CD8-positive, alpha-beta T cell (primary cell): ENCODE measurements at regions of chr17 and their contacts with region 1.

Region 1: GRCh38 chr17:49053171-49053829 is 56.1 kb downstream of the IGF2BP1 start:
- DNase-seq: no peak
- ATAC-seq: no peak
- H3K4me3 ChIP-seq: no peak overlapping the region
- H3K4me3 Mint-ChIP-seq: no peak overlapping the region
- H3K27ac ChIP-seq: no peak overlapping the region
- H3K27ac Mint-ChIP-seq: no peak overlapping the region
- H3K4me1 ChIP-seq: no peaks in the 10 kb centered on the region
- H3K4me1 Mint-ChIP-seq: no peaks in the 10 kb centered on the region
- H3K27me3 ChIP-seq: peaks cover 0 to under 1% of the 10 kb centered on the region in 2 experiments
- H3K27me3 Mint-ChIP-seq: peaks cover 12% of the 10 kb centered on the region
- CTCF ChIP-seq: no peak

Region 2: GRCh38 chr17:48738803-48739526 is 314.3 kb before region 1 on chr17:
- CTCF ChIA-PET with region 1: no interaction called
- POLR2A ChIA-PET with region 1: no interaction called
- intact Hi-C with region 1: no loop called
- DNase-seq: no peak
- ATAC-seq: no peak
- H3K4me3 ChIP-seq: no peak overlapping the region
- H3K4me3 Mint-ChIP-seq: no peak overlapping the region
- H3K27ac ChIP-seq: no peak overlapping the region
- H3K27ac Mint-ChIP-seq: no peak overlapping the region
- H3K4me1 ChIP-seq: peaks cover 9% of the 10 kb centered on the region
- H3K4me1 Mint-ChIP-seq: peaks cover 7% of the 10 kb centered on the region
- H3K27me3 ChIP-seq: peaks cover 40 to 57% of the 10 kb centered on the region in 2 experiments
- H3K27me3 Mint-ChIP-seq: peaks cover 91% of the 10 kb centered on the region
- CTCF ChIP-seq: no peak

Region 3: GRCh38 chr17:49117587-49118230 is 64.4 kb after region 1 on chr17:
- CTCF ChIA-PET with region 1: no interaction called
- POLR2A ChIA-PET with region 1: no interaction called
- intact Hi-C with region 1: loop called in 1 of 2 experiments (anchors 10 kb)
- DNase-seq: no peak
- ATAC-seq: no peak
- H3K4me3 ChIP-seq: no peak overlapping the region
- H3K4me3 Mint-ChIP-seq: no peak overlapping the region
- H3K27ac ChIP-seq: no peak overlapping the region
- H3K27ac Mint-ChIP-seq: no peak overlapping the region
- H3K4me1 ChIP-seq: no peaks in the 10 kb centered on the region
- H3K4me1 Mint-ChIP-seq: no peaks in the 10 kb centered on the region
- H3K27me3 ChIP-seq: no peaks in the 10 kb centered on the region
- H3K27me3 Mint-ChIP-seq: peaks cover 35% of the 10 kb centered on the region
- CTCF ChIP-seq: no peak